ENCODE measurements at regions of chr12 and their contacts with region 1.

Region 1: GRCh38 chr12:32574585-32574984 is 104.5 kb upstream of the DNM1L start:
- DNase-seq: no peak
- H3K4me3 ChIP-seq: no peak overlapping the region
- H3K27ac ChIP-seq: no peak overlapping the region
- H3K27me3 ChIP-seq: no peaks in the 10 kb centered on the region
- CTCF ChIP-seq: no peak

Region 2: DNA sequence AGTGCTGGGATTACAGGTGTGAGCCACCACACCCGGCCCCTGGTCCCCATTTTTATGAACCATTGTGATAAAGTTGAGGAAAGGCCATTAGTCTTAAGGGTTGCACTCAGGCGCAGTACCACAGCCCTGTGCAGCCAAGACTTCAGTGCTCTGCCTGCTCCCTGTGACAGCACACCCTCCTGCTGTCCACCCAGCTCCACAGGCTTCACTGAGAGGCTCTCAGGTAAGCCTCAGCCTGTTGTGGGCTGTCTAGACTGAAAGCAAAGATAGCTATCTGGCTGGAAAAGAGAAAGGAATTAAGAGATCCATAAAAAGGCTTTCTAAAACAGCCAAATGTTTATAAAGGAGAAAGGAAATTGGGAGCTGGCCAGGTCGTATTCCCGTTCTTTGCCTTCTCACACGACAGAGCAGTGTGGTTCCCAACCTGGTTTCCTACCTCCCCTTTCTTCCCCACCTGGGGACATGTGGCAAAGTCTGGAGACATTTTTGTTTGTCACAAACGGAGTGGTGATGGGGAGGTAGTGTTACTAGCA is 85.4 kb after region 1 on chr12:
- intact Hi-C with region 1: loop called in 1 of 2 experiments (anchors 10 kb)
- DNase-seq: no peak
- H3K4me3 ChIP-seq: no peak overlapping the region
- H3K27ac ChIP-seq: no peak overlapping the region
- H3K27me3 ChIP-seq: no peaks in the 10 kb centered on the region
- CTCF ChIP-seq: no peak

Region 3: DNA sequence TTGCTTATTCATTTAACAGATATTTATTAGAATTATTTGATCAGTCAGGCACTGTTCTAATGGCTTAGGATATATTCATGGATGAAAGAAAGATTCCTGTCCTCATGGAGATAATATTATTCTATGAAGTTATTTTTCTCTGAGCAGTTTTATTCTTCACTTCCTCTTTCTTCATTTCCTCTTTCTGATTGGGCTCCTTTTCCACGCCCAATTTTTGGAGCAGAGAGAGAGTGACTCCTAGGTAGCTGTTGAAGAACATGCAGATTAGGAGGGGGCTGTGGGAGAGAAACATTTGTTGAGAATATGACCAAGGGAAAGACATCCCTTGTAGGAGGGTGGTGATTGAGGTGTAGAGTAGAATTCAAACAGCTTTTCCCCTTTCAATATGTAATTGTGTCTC is 187.1 kb after region 1 on chr12:
- intact Hi-C with region 1: no loop called
- DNase-seq: no peak
- H3K4me3 ChIP-seq: peak overlapping the region in 1 of 59 donors; percentile 4
- H3K27ac ChIP-seq: no peak overlapping the region
- H3K27me3 ChIP-seq: peaks cover 0 to 2% (median 0%) of the 10 kb centered on the region in 45 donors
- CTCF ChIP-seq: no peak

Region 4: GRCh38 chr12:32988982-32989381 is 414.4 kb after region 1 on chr12:
- intact Hi-C with region 1: no loop called
- DNase-seq: no peak
- H3K4me3 ChIP-seq: no peak overlapping the region
- H3K27ac ChIP-seq: no peak overlapping the region
- H3K27me3 ChIP-seq: peaks cover 0 to 14% (median 0%) of the 10 kb centered on the region in 45 donors
- CTCF ChIP-seq: no peak

Measured in dorsolateral prefrontal cortex (tissue), 120 donors.